Endothelial cell of umbilical vein (primary cell): ENCODE measurements at regions of chr5 and their contacts with region 1.

Region 1: GRCh38 chr5:121121786-121122185 is 657.7 kb downstream of the PRR16 start:
- DNase-seq: no peak
- H3K4me3 ChIP-seq: no peak overlapping the region
- H3K27ac ChIP-seq: no peak overlapping the region
- H3K4me1 ChIP-seq: no peaks in the 10 kb centered on the region
- H3K27me3 ChIP-seq: no peaks in the 10 kb centered on the region
- CTCF ChIP-seq: no peak
- POLR2A ChIP-seq: no peak

Region 2: DNA sequence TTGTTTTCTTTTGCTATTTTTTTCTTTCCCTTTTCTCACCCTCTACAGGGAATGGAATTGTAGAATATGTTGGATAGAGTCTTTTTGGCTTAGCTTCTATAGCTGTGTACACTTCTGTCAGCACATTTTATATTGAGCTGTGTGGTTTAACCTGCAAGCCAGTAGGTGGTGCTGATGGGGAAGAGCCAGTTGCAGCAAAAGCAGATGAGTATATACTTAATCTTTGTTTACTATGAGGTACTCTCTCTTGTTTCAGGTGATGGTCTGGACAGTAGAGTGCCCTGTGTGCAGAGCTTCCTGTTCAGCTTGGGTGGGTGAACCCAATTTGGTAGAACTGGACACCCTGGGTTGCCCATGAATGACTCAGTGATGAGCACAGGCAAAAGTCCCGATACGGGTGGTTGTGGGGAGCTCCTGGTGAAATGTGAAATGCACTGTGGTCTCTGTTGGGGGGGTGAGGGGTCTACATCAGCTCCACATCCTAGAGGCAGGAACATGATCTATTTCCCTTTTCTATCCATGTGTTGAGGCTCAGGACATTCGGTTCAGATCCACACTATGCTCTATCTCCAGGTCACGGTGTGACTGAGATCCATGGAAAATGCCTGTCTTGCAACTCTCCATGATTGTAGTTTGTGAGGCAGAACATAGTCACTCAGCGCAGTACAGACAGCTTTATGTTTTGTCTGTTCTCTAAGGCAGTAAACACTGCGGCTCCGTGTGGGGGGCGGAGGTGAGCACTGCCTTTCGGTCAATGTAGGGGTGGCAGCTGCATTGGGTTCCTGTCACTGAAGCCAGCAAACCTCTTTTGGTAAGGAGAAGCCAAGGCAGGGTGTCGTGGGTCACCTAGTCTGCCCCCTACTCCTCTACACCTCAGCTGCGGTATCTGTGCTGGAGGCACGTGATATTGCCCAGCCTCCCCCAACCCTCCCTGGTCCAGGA is 304.5 kb before region 1 on chr5:
- CTCF ChIA-PET with region 1: no interaction called
- POLR2A ChIA-PET with region 1: no interaction called
- dilution Hi-C with region 1: no loop called
- intact Hi-C with region 1: no loop called
- DNase-seq: peak; percentile 17
- H3K4me3 ChIP-seq: no peak overlapping the region
- H3K27ac ChIP-seq: no peak overlapping the region
- H3K4me1 ChIP-seq: no peaks in the 10 kb centered on the region
- H3K27me3 ChIP-seq: no peaks in the 10 kb centered on the region
- CTCF ChIP-seq: peak; percentile 31 to 46
- POLR2A ChIP-seq: no peak

Region 3: GRCh38 chr5:121152411-121152810 is 30.6 kb after region 1 on chr5:
- CTCF ChIA-PET with region 1: no interaction called
- POLR2A ChIA-PET with region 1: no interaction called
- dilution Hi-C with region 1: no loop called
- intact Hi-C with region 1: loop called (anchors 2 kb)
- DNase-seq: no peak
- H3K4me3 ChIP-seq: no peak overlapping the region
- H3K27ac ChIP-seq: no peak overlapping the region
- H3K4me1 ChIP-seq: no peaks in the 10 kb centered on the region
- H3K27me3 ChIP-seq: no peaks in the 10 kb centered on the region
- CTCF ChIP-seq: no peak
- POLR2A ChIP-seq: no peak